Head of caudate nucleus (tissue), 42 donors: ENCODE measurements at regions of chr7 and their contacts with region 1.

Region 1: DNA sequence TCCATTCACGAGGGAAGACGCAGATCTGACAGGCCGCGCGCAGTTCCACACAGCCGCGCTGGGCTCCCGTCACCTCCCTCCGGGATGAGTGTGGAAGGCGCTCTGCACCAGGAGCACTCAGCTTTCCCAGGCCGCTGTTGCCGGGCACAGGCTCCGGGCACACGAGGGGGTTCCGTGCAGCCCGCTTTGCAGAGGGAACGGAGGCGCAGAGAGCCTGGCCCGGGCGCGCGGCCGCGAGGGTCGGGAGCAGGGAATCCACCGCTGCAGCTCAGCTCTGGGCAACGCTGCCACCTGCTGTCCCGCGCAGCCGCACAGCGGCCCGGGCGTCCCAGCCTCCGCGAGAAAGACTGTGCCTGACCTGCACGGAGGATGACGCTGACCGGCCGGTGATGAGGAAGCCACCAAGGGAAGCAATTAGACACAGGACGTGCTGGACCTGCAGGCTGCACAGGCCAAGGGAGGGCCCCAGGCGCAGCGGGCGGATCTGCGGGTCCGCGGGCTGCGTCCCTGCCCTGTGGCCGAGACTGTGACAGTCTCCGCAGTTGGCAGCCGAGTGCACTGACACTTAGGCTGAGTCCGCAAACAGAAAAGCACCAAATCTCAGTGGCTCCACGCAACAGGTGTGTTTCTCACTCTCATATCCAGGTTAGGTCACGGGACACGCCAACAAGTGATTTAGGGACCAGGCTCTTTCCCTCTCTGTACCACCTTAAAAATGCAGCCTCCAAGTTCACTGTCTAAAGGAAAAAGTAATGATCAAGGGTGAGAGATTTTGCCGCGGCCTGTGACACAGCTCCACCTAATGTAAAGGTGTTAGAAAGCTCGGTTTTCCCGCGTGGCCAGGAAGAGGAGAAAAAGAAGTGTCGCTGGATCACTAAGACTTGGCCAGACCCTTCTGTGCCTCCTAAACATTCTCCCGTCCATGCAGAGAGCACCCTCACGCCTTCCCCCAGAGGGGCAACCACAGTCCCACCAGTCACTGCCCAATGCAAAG is 94.5 kb downstream of the SEC61G start:
- DNase-seq: peak; percentile 42 to 89 (median 80)

Region 2: GRCh38 chr7:54546081-54546985 is 118.2 kb before region 1 on chr7:
- intact Hi-C with region 1: loop called (anchors 10 kb)
- DNase-seq: peak in 28 of 42 donors; percentile 14 to 63 (median 42)

Region 3: DNA sequence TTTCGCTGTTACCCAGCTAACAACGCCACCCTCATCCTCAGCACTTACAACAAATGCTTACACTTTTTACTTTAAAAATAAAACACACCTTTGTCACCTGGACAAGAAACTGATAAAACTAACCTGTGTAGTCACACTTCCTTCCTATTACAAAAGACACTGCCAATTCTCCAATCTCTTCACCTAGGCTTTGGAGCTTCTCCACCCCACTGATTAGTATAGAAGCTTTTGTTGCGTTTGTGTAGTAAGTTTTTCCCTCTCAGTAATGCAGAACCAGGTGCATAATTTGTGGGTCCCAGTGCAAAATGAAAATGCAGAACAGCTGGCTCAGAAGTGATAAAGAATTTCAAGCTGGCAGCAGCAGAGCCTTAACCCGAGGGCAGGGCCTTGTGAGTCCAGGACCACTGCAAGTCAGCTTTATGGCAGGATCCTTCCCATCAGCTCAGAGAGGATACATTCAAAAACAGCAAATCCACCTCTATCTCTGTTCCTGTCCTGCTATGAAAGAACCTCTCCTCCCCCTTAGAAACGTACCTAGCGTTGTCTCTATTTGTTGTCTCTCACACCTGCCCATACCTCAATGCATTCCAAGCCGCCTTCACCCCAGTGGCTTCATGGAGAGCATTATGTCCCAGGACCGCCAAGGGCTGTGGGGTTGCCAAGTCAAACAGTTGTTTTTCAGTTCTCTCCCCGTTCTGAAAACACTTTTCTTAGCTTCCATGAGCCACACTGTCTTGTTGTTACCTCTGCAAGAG is 314.0 kb after region 1 on chr7:
- intact Hi-C with region 1: no loop called
- DNase-seq: no peak